ENCODE measurements at regions of chr19 and their contacts with region 1.

Region 1: GRCh38 chr19:47813304-47814004 is 8.3 kb upstream of the CRX start:
- DNase-seq: peak; percentile 83
- H3K4me3 Mint-ChIP-seq: no peak overlapping the region
- H3K27ac Mint-ChIP-seq: no peak overlapping the region
- H3K4me1 Mint-ChIP-seq: no peaks in the 10 kb centered on the region
- H3K27me3 Mint-ChIP-seq: peaks cover 6% of the 10 kb centered on the region

Region 2: DNA sequence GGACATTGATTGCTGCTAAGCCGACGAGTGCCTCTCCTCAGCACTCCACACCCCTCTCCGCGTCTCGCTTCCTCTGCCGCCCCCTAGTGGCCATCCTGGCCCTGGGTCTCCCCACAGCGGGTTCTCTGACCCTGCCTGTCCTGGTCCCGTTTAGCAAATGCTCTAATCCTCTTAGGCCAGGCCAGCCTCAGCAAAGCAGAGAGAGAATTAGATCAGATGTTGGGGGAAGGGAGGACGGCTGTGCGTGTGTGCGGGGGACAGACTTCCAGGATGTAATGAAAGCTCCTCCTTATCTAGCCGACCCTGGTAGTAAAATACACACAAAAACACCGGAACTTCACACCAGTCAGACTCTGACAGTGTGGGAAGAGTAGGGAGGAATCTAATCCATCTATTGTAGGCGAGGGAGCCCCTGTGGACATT is 50.1 kb after region 1 on chr19:
- CTCF ChIA-PET with region 1: interaction called, 10 read pairs
- POLR2A ChIA-PET with region 1: no interaction called
- intact Hi-C with region 1: loop called (anchors 5 kb)
- DNase-seq: peak; percentile 90
- H3K4me3 Mint-ChIP-seq: no peak overlapping the region
- H3K27ac Mint-ChIP-seq: no peak overlapping the region
- H3K4me1 Mint-ChIP-seq: no peaks in the 10 kb centered on the region
- H3K27me3 Mint-ChIP-seq: peaks cover 7% of the 10 kb centered on the region